PC-3 (cell line): ENCODE measurements at regions of chr1 and their contacts with region 1.

Region 1: DNA sequence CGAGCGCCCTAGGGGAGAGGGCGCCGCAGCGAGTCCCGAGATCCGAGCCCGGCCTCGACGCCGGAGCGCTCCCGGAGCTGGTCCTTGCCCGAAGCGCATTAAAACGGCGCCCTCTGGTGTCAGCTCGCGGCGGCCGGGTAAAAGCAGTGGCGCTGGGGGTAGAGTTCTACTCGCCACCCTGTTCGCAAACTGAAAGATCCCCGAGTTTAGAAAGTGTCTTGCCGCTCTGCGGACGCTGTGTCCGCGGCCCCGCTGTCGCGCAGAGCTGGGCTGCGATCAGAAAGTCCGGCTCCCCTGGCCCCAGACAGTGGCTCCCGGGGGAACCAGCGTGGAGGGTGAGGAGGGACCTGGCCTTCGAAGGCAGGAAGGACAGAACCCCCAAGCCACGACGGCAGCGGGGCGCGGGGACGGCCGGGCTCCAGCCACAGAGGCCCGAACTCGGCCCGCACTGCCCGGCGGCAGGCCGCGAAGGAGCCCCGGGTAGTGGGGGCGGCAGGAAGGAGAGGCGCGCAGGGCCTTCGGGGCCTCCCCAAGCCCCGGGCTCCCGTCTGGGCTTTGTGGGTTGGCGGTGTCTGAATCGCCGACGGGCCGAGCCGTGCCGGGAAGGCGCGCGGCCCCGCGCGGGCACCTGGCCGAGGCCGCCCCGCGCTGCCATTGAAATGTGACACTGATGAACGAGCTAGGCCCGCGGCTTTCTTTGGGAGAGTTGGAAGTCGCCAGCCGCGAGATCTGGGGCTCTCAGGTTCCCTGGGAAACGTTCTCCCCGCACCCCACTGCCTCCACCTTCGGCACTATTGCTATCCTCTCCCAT is 39.1 kb upstream of the NFIA start:
- DNase-seq: peak; percentile 78
- ATAC-seq: peak; percentile 97
- H3K4me3 ChIP-seq: peak overlapping the region; percentile 56
- H3K27ac ChIP-seq: no peak overlapping the region
- H3K4me1 ChIP-seq: no peaks in the 10 kb centered on the region; the same call in 1 of the 2 replicates
- H3K27me3 ChIP-seq: no peaks in the 10 kb centered on the region
- CTCF ChIP-seq: peak; percentile 86

Region 2: DNA sequence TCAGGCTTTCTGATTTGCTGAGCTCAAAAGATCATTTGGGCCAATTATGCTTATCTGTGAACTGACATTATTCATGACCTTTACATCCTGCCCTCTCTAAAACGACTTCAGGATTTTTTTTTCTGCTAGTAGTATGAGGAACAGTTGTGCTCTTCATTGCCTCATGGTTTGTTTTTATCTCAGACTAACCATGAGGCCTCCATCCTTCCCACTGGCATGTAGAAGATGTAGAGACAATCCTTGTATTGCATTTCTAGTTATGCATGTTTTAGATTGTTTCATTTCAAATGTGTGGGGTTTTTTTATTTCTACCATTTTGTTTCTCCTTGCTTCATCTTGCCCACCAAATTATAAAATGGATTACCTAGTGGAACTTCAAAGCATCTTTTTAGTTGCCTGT is 886.8 kb before region 1 on chr1:
- CTCF ChIA-PET with region 1: interaction called, 3 read pairs
- POLR2A ChIA-PET with region 1: no interaction called
- intact Hi-C with region 1: loop called (anchors 5 kb)
- DNase-seq: no peak
- ATAC-seq: no peak
- H3K4me3 ChIP-seq: no peak overlapping the region
- H3K27ac ChIP-seq: no peak overlapping the region
- H3K4me1 ChIP-seq: no peaks in the 10 kb centered on the region
- H3K27me3 ChIP-seq: peaks cover 54% of the 10 kb centered on the region
- CTCF ChIP-seq: no peak

Region 3: DNA sequence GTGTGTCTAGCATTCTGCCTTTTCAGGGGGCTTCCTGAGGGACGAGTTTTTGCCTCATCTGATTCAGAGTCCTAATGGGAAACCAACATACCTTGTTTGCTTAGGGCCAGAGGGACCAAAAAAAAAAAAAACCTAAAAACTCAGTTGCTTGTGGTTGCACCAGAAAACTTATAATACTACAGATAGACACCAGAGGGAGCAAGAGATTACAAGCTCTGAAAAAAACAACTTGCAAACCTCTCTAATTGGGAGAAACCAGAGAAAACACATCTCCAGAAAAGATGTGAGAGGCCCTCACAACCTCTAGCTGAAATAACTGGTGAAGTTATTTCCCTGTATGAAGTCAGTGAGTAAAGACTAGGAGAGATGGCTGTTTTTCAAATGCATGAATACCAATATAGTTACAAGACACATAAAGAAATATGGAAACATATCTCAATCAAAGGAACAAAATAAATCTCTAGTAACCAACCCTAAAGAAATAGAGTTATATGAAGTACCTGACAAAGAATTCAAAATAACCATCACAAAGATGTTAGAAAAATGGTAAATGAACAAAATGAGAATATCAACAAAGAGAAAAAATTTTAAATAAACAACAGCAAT is 194.5 kb before region 1 on chr1:
- CTCF ChIA-PET with region 1: interaction called, 6 read pairs
- POLR2A ChIA-PET with region 1: interaction called, 34 read pairs
- intact Hi-C with region 1: loop called (anchors 5 kb)
- DNase-seq: peak; percentile 55
- ATAC-seq: no peak
- H3K4me3 ChIP-seq: no peak overlapping the region
- H3K27ac ChIP-seq: no peak overlapping the region
- H3K4me1 ChIP-seq: no peaks in the 10 kb centered on the region
- H3K27me3 ChIP-seq: peaks cover 27% of the 10 kb centered on the region
- CTCF ChIP-seq: peak; percentile 76

Region 4: DNA sequence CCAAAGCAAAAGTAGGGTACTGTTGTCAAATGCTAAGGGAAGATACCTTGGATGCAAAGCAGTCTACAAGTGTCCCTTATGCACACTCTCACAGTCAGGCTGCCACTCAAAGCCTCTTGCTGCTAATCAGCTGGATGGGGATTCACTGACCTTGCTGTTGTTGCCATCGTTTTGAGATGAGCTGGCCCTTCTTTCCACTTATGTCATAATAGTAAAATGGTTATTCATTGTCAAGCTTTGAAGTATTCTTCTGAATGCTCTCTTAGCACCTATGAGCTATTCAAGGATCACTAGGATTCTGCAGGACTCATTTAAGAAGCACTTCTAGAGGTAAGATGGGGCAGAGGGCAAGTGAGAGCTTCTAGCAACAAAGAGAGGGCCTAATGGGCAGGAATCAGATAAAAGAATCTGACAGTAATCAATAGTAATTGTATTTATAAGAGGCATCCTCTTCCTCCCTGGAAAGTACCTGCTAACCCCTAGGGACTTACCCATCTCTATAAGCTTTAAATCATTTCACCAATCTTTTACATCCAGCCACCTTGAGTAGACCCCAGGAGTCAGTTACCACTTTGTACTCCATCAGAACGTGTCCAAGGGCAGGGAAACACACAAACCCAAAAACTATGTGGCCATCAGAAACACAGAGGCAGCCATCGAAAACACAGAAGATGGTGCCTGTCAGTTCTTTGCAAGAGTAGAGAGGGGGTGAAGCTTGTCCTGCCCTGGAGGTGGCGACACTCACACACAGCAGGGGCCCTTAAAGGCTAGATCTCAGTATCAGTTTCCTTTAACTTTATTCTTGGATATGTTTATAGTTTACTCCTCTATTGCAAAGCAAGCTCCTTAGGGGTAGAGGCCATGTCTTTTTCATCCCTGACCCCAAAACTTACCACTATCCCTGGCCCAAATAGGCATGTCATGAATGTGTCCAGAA is 64.5 kb before region 1 on chr1:
- CTCF ChIA-PET with region 1: interaction called, 5 read pairs
- POLR2A ChIA-PET with region 1: no interaction called
- intact Hi-C with region 1: loop called (anchors 1 kb)
- DNase-seq: peak; percentile 64
- ATAC-seq: peak; percentile 94
- H3K4me3 ChIP-seq: no peak overlapping the region
- H3K27ac ChIP-seq: no peak overlapping the region
- H3K4me1 ChIP-seq: no peaks in the 10 kb centered on the region
- H3K27me3 ChIP-seq: no peaks in the 10 kb centered on the region
- CTCF ChIP-seq: peak; percentile 93

Region 5: GRCh38 chr1:61005614-61006580 is 37.3 kb before region 1 on chr1:
- CTCF ChIA-PET with region 1: no interaction called
- POLR2A ChIA-PET with region 1: no interaction called
- intact Hi-C with region 1: no loop called
- DNase-seq: no peak
- ATAC-seq: no peak; the same call in 1 of the 2 replicates
- H3K4me3 ChIP-seq: no peak overlapping the region
- H3K27ac ChIP-seq: no peak overlapping the region
- H3K4me1 ChIP-seq: no peaks in the 10 kb centered on the region
- H3K27me3 ChIP-seq: peaks cover 10% of the 10 kb centered on the region
- CTCF ChIP-seq: no peak

Region 6: DNA sequence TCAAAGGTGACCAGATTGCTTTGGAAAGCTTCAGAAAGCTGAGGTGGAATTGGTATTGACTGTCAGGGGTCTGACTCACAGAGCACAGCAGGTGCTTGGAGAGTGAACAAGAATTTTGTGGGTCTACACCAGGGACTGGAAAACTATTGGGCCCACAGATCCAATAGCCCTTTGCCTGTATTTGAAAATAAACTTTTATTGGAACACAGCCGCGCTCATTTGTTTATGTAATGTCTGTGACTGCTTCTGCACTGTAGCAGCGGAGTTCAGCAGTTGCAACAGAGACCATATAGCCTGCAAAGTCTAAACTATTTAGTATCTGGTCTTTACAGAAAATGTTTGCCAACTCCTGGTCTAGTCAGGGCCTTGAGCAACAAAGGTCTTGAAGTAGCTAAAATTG is 354.7 kb after region 1 on chr1:
- CTCF ChIA-PET with region 1: no interaction called
- POLR2A ChIA-PET with region 1: no interaction called
- intact Hi-C with region 1: no loop called
- DNase-seq: no peak
- ATAC-seq: no peak
- H3K4me3 ChIP-seq: no peak overlapping the region
- H3K27ac ChIP-seq: no peak overlapping the region
- H3K4me1 ChIP-seq: no peaks in the 10 kb centered on the region
- H3K27me3 ChIP-seq: no peaks in the 10 kb centered on the region
- CTCF ChIP-seq: no peak